Heart left ventricle (tissue), 16 donors: ENCODE measurements at regions of chr10 and their contacts with region 1.

Region 1: DNA sequence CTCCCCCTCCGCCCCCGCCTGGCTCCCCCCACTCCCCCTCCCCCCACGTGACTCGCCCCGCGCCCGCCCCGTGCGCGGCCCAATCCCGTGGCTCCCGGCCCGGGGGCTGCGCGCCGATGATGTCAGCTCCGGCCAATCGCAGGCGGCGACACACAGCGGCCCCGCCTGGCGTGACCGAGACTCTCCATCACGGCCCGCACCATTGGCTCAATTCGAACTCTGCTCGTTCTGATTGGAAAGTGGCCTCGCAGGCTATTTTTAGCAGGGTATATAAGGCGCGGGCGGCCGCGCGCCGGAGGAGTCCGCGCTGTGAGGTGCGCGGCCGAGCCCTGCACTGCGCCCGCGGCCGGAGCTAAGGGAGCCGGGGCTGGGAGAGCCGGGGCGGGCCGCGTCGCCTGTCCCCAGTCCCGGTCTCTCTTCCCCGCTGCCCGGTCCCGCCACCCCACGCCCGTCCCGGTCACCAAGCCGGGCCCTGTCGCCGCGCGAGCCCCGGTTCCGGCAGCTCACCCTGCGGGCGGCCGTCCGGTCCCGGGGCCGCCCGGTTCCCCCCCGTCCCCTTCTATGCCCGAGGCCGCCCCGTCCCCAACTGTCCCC is 345 bp upstream of the KLF6 start:
- DNase-seq: peak; percentile 99 to 100 (median 99)
- ATAC-seq: peak; percentile 80 to 91 (median 82)
- H3K4me3 ChIP-seq: peak overlapping the region; percentile 66 to 100 (median 96)
- H3K27ac ChIP-seq: peak overlapping the region; percentile 98 to 100 (median 100)
- H3K4me1 ChIP-seq: peaks cover 0 to 35% (median 20%) of the 10 kb centered on the region in 12 donors
- H3K27me3 ChIP-seq: no peaks in the 10 kb centered on the region
- CTCF ChIP-seq: peak in 1 of 12 donors; percentile 21
- POLR2A ChIP-seq: peak; percentile 99 to 100

Region 2: GRCh38 chr10:3452173-3452626 is 333.2 kb before region 1 on chr10:
- intact Hi-C with region 1: loop called in 2 of 10 experiments (anchors 5 to 10 kb)
- DNase-seq: peak in 1 of 5 donors; percentile 50
- ATAC-seq: peak; percentile 62 to 92 (median 79)
- H3K4me3 ChIP-seq: peak overlapping the region in 3 of 12 donors; percentile 1 to 20 (median 15)
- H3K27ac ChIP-seq: peak overlapping the region; percentile 53 to 88 (median 76)
- H3K4me1 ChIP-seq: peaks cover 0 to 36% (median 21%) of the 10 kb centered on the region in 12 donors
- H3K27me3 ChIP-seq: no peaks in the 10 kb centered on the region
- CTCF ChIP-seq: peak; percentile 30 to 68 (median 47)
- POLR2A ChIP-seq: no peak

Region 3: DNA sequence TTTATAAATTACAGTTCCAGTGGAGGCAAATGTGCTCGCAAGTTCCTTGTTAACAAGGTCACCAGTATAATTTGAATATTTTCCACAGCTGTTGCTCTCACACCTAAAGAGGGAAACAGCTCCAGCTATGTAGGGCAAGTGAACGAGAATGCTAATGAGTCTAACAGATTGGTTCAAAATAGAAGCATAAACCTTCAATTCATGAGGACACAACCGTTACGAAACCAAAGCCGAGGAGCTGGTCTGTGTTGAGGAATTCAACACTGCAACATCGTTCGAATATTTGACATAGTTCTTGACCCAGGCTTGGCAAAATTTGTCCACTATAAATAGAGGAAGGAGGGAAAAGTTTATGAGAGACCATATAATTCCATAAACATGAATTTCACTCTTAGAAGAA is 161.6 kb before region 1 on chr10:
- intact Hi-C with region 1: loop called in 1 of 10 experiments (anchors 10 kb)
- DNase-seq: no peak
- ATAC-seq: peak; percentile 76 to 94 (median 82)
- H3K4me3 ChIP-seq: peak overlapping the region in 1 of 12 donors; percentile 1
- H3K27ac ChIP-seq: peak overlapping the region in 10 of 12 donors; percentile 11 to 69 (median 24)
- H3K4me1 ChIP-seq: peaks cover 0 to 20% (median 8%) of the 10 kb centered on the region in 12 donors
- H3K27me3 ChIP-seq: no peaks in the 10 kb centered on the region
- CTCF ChIP-seq: no peak
- POLR2A ChIP-seq: no peak

Region 4: GRCh38 chr10:3887885-3888476 is 102.6 kb after region 1 on chr10:
- intact Hi-C with region 1: loop called in 1 of 10 experiments (anchors 5 kb)
- DNase-seq: peak in 1 of 5 donors; percentile 54
- ATAC-seq: peak in 3 of 4 donors; percentile 25 to 56 (median 43)
- H3K4me3 ChIP-seq: no peak overlapping the region
- H3K27ac ChIP-seq: peak overlapping the region; percentile 72 to 88 (median 82)
- H3K4me1 ChIP-seq: peaks cover 0 to 35% (median 19%) of the 10 kb centered on the region in 12 donors
- H3K27me3 ChIP-seq: no peaks in the 10 kb centered on the region
- CTCF ChIP-seq: no peak
- POLR2A ChIP-seq: no peak

Region 5: DNA sequence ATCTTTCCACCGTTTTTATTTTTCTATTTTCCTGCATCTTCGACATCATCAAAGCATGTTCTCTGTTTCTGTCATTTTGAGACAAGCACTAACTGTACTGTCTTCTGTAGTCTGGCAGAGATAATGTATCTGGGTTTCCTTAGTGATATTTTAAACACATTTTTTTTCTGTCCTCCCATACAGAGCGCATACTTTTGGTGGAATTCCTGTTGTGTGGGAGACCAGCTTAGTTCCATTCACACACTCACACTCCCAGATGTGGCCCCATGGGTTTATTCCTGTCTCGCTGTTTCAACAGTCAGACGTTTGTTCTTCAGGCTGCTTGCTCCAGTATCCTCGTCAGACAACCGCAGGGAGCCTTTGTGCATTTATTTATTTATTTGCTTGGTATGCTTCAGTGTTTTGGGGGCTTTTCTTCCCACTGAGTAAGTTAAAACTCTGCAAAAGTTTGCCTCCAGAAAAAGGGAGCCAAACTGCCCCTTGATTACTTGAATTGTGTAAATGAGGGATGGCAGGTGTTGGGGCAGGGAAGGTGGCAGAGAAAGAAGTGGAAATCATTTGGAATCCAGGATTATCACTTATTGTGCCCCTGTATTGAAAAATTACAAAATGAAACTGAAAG is 456.5 kb after region 1 on chr10:
- intact Hi-C with region 1: loop called in 6 of 10 experiments (anchors 2 to 10 kb)
- DNase-seq: peak in 4 of 5 donors; percentile 72 to 78 (median 76)
- ATAC-seq: peak; percentile 87 to 91 (median 88)
- H3K4me3 ChIP-seq: peak overlapping the region in 11 of 12 donors; percentile 26 to 57 (median 45)
- H3K27ac ChIP-seq: peak overlapping the region; percentile 63 to 96 (median 89)
- H3K4me1 ChIP-seq: peaks cover 0 to 50% (median 41%) of the 10 kb centered on the region in 12 donors
- H3K27me3 ChIP-seq: no peaks in the 10 kb centered on the region
- CTCF ChIP-seq: no peak
- POLR2A ChIP-seq: no peak

Region 6: GRCh38 chr10:4656576-4657182 is 871.3 kb after region 1 on chr10:
- intact Hi-C with region 1: loop called in 7 of 10 experiments (anchors 2 to 10 kb)
- DNase-seq: peak; percentile 47 to 66 (median 59)
- ATAC-seq: peak in 3 of 4 donors; percentile 70 to 76 (median 72)
- H3K4me3 ChIP-seq: no peak overlapping the region
- H3K27ac ChIP-seq: peak overlapping the region in 1 of 12 donors; percentile 12
- H3K4me1 ChIP-seq: peaks cover 0 to 22% (median 8%) of the 10 kb centered on the region in 12 donors
- H3K27me3 ChIP-seq: no peaks in the 10 kb centered on the region
- CTCF ChIP-seq: peak; percentile 85 to 97 (median 91)
- POLR2A ChIP-seq: no peak